Thyroid gland (tissue), 4 donors: ENCODE measurements at regions of chr10 and their contacts with region 1.

Region 1: GRCh38 chr10:103244663-103245271 is 920 bp upstream of the RPEL1 start:
- DNase-seq: peak; percentile 76 to 83
- H3K4me3 ChIP-seq: no peak overlapping the region
- H3K27ac ChIP-seq: no peak overlapping the region
- H3K4me1 ChIP-seq: peaks cover 12 to 21% of the 10 kb centered on the region in 2 donors
- H3K27me3 ChIP-seq: no peaks in the 10 kb centered on the region
- CTCF ChIP-seq: peak; percentile 71 to 94 (median 86)
- POLR2A ChIP-seq: no peak

Region 2: GRCh38 chr10:102917962-102918816 is 326.6 kb before region 1 on chr10 and contains the start of gene CNNM2:
- intact Hi-C with region 1: loop called (anchors 5 kb)
- DNase-seq: peak; percentile 100
- H3K4me3 ChIP-seq: peak within 1 kb of the TSS; percentile 93 to 95 (median 94)
- H3K27ac ChIP-seq: peak within 1 kb of the TSS; percentile 90 to 96 (median 95)
- H3K4me1 ChIP-seq: peaks cover 28 to 30% of the 10 kb centered on the region in 2 donors
- H3K27me3 ChIP-seq: no peaks in the 10 kb centered on the region
- CTCF ChIP-seq: no peak
- POLR2A ChIP-seq: peak; percentile 15 to 87
- total RNA-seq, gene CNNM2: 15.2 to 19.2 (median 15.9) TPM

Region 3: DNA sequence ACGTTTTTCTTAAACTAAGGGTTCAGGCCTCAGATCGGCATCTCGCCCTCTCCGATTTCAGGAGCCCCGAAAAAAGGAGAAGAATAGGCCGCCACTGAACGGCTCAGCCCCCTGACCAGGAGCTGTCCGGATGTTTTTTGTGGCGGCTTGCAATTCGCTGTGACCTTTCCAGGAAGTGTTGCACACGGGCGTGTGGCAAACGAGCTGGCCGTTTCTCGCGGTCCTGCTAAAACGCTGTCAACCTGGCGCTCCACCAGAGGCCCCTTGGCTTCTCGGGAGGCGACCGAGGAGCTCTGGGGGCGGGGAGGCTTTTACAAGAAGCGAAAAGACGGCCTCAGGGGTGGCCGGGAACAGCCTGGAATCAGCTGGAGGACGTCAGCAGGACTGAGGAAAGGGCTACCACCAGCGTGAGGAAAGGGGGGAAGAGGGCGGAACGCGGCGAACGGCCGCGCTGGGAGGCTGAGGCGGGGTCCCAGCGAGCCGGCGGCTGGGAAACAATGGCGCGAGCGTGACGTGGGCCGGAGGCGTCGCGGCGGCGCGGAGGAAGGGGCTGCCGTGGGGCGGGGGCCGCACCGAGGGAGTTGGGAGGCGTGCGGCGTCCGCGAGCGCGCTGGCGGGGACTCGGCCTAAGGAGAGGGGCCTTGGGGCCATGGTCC is 52.2 kb before region 1 on chr10:
- intact Hi-C with region 1: loop called (anchors 5 kb)
- DNase-seq: peak; percentile 90
- H3K4me3 ChIP-seq: peak overlapping the region; percentile 28 to 93 (median 86)
- H3K27ac ChIP-seq: peak overlapping the region; percentile 96 to 99 (median 99)
- H3K4me1 ChIP-seq: peaks cover 40 to 60% of the 10 kb centered on the region in 2 donors
- H3K27me3 ChIP-seq: no peaks in the 10 kb centered on the region
- CTCF ChIP-seq: no peak
- POLR2A ChIP-seq: peak; percentile 22 to 80